ENCODE measurements at regions of chr7 and their contacts with region 1.

Region 1: GRCh38 chr7:94295850-94296249 is 98.8 kb upstream of the COL1A2 start:
- DNase-seq: peak; percentile 75
- H3K4me3 ChIP-seq: no peak overlapping the region
- H3K27ac ChIP-seq: no peak overlapping the region
- H3K4me1 ChIP-seq: peaks cover 2% of the 10 kb centered on the region
- H3K27me3 ChIP-seq: no peaks in the 10 kb centered on the region
- CTCF ChIP-seq: peak; percentile 35 to 50
- POLR2A ChIP-seq: no peak

Region 2: DNA sequence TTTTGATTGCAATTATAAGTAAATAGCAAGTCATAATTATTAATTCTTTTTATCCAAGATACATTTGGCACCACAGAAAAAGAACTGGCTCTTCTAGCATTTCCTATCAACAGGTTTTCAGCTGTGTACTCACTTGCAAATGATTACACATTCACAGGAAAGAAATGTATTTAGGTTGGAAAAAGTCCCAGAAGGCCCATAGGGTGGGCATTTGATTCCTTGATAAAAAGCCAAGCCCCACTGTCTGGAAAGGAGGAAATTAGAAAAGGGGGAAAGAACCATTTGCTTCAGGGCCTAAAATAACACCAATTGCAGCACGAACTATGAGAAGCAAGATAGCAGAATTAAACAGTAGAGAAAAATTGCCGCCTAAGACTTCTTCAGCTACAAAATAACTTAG is 18.1 kb after region 1 on chr7:
- CTCF ChIA-PET with region 1: interaction called, 43 read pairs
- POLR2A ChIA-PET with region 1: no interaction called
- dilution Hi-C with region 1: no loop called
- intact Hi-C with region 1: loop called (anchors 1 kb)
- DNase-seq: peak; percentile 96
- H3K4me3 ChIP-seq: peak overlapping the region in 1 of 3 experiments; percentile 33
- H3K27ac ChIP-seq: peak overlapping the region; percentile 78
- H3K4me1 ChIP-seq: peaks cover 34% of the 10 kb centered on the region
- H3K27me3 ChIP-seq: no peaks in the 10 kb centered on the region
- CTCF ChIP-seq: no peak
- POLR2A ChIP-seq: peak; percentile 24

Region 3: GRCh38 chr7:94374231-94374630 is 78.4 kb after region 1 on chr7:
- CTCF ChIA-PET with region 1: interaction called, 37 read pairs
- POLR2A ChIA-PET with region 1: interaction called, 4 read pairs
- dilution Hi-C with region 1: no loop called
- intact Hi-C with region 1: loop called (anchors 1 kb)
- DNase-seq: peak; percentile 92
- H3K4me3 ChIP-seq: no peak overlapping the region
- H3K27ac ChIP-seq: peak overlapping the region; percentile 85
- H3K4me1 ChIP-seq: peaks cover 21% of the 10 kb centered on the region
- H3K27me3 ChIP-seq: no peaks in the 10 kb centered on the region
- CTCF ChIP-seq: no peak
- POLR2A ChIP-seq: no peak

Region 4: GRCh38 chr7:94400643-94401427 is 105.0 kb after region 1 on chr7:
- CTCF ChIA-PET with region 1: interaction called, 868 read pairs
- POLR2A ChIA-PET with region 1: interaction called, 5 read pairs
- dilution Hi-C with region 1: no loop called
- intact Hi-C with region 1: no loop called
- DNase-seq: peak; percentile 53
- H3K4me3 ChIP-seq: no peak overlapping the region
- H3K27ac ChIP-seq: no peak overlapping the region
- H3K4me1 ChIP-seq: peaks cover 10% of the 10 kb centered on the region
- H3K27me3 ChIP-seq: no peaks in the 10 kb centered on the region
- CTCF ChIP-seq: no peak
- POLR2A ChIP-seq: no peak

Region 5: DNA sequence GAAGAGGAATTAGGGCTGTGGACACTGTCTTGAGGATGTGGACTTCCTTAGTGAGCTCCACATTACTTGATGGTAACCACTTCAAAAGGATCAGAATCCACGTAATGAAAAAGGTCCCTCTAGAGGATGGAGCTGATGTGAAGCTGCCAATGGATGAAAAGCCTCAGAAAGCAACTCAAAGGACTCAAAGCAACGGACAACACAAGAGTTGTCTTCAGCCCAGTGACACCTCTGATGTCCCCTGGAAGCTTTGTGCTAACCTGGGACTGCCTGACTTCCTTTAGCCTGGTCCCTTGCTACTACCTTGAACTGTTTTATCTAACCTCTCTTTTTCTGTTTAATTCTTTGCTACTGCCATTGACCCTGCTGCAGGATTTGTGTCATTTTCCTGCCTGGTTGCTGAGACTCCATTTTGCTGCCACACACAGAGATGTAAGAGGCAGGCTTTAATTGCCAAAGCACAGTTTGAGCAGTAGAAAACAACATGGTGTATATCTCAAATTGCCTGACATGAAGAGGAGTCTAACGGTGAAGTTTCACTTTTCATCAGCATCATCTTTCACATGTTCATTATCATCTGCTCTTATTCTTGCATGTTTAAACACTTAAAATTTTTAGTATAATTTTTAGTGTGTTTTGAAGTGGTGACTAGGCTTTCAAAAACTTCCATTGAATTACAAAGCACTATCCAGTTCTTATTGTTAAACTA is 371.2 kb after region 1 on chr7:
- CTCF ChIA-PET with region 1: no interaction called
- POLR2A ChIA-PET with region 1: no interaction called
- dilution Hi-C with region 1: no loop called
- intact Hi-C with region 1: no loop called
- DNase-seq: no peak
- H3K4me3 ChIP-seq: no peak overlapping the region
- H3K27ac ChIP-seq: no peak overlapping the region
- H3K4me1 ChIP-seq: no peaks in the 10 kb centered on the region
- H3K27me3 ChIP-seq: no peaks in the 10 kb centered on the region
- CTCF ChIP-seq: no peak
- POLR2A ChIP-seq: no peak

Region 6: DNA sequence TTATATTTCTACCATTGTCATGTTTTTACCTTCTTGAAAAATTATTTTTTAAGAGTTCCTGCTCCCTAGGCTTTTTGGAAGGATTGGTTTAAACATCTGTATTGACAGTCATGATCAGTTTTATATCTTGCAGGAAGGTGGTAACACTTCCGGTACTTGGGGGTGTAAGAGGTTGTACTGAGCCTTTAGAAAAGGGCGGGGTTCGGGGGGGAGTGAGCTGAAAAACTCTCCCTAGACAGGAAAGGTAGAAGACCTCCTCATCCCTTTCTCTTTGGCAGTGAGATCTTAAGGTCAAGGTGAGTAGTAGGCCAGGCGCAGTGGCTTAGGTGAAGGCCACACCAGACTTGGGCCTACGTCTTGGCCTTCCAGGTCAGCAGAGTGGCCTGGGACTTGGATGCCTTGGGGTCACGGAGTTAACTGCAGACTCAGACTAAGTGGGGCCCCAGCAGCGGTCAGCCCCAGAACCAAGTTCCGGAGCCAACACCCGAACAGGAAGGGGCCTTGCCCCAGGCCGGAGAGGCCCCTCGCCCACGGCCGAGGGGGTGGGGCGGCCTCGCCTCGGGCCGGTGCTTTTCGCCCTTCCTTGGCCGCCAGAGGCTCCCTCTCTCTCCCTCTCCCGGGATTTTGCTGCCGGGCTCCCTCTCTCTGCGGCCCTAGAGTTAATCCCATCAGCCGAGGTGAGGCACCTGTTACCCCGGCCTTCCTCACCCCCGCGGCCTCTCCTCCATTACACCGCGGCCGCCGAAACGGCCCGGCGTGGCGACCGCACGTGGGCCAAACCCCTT is 611.4 kb after region 1 on chr7 and contains the start of gene PPP1R9A:
- CTCF ChIA-PET with region 1: no interaction called
- POLR2A ChIA-PET with region 1: no interaction called
- dilution Hi-C with region 1: no loop called
- intact Hi-C with region 1: loop called (anchors 10 kb)
- DNase-seq: peak; percentile 23
- H3K4me3 ChIP-seq: peak within 1 kb of the TSS; percentile 35 to 63 (median 45)
- H3K27ac ChIP-seq: no peak within 1 kb of the TSS
- H3K4me1 ChIP-seq: peaks cover 3% of the 10 kb centered on the region
- H3K27me3 ChIP-seq: peaks cover 11 to 18% of the 10 kb centered on the region in 2 experiments
- CTCF ChIP-seq: peak in 1 of 2 donors; percentile 57
- POLR2A ChIP-seq: no peak
- total RNA-seq, gene PPP1R9A: 3.0 and 3.2 TPM in 2 replicates

Region 7: GRCh38 chr7:95246831-95247370 is 951.1 kb after region 1 on chr7:
- CTCF ChIA-PET with region 1: interaction called, 22 read pairs
- POLR2A ChIA-PET with region 1: no interaction called
- dilution Hi-C with region 1: no loop called
- intact Hi-C with region 1: no loop called
- DNase-seq: peak; percentile 71
- H3K4me3 ChIP-seq: no peak overlapping the region
- H3K27ac ChIP-seq: no peak overlapping the region
- H3K4me1 ChIP-seq: no peaks in the 10 kb centered on the region
- H3K27me3 ChIP-seq: no peaks in the 10 kb centered on the region
- CTCF ChIP-seq: peak; percentile 63 to 68
- POLR2A ChIP-seq: no peak